ENCODE measurements at regions of chr12 and their contacts with region 1.

Region 1: GRCh38 chr12:116759783-116760621 is 21.9 kb downstream of the RNFT2 start:
- DNase-seq: no peak

Region 2: DNA sequence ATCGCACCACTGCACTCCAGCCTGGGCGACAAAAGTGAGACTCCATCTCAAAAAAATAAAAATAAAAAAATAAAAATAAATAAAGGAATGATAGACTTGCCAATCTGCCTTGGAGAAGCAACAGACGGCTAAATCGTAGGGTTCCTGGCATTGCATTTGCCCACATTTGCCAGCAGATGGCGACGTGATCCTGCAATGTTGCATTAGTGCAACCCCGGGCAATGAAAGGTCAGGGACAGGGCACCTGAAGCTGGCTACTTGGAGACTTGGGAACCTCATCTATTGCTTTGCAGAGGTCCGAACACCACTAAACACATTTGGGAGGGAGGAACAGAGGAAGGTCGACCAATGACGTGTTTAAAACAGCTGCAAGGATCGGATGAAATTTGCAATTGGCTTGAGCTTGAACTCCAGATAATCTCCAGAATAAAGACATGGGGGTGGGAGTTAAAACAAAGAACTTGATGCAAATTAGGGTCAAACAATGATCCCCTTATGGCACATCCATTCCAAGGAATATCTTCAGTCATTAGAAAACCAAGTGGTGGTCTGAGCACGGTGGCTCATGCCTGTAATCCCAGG is 56.7 kb before region 1 on chr12:
- CTCF ChIA-PET with region 1: interaction called, 10 read pairs
- POLR2A ChIA-PET with region 1: no interaction called
- DNase-seq: peak; percentile 78

Measured in HEK293T (cell line).